CD14-positive monocyte (primary cell): ENCODE measurements at regions of chr9 and their contacts with region 1.

Region 1: GRCh38 chr9:83937911-83938323 is 16.7 kb upstream of the KIF27 start:
- DNase-seq: peak; percentile 50 to 78 (median 70)
- H3K4me3 ChIP-seq: no peak overlapping the region
- H3K4me3 Mint-ChIP-seq: no peak overlapping the region
- H3K27ac ChIP-seq: no peak overlapping the region
- H3K27ac Mint-ChIP-seq: peak overlapping the region in 4 of 7 donors; percentile 16 to 65 (median 31)
- H3K4me1 ChIP-seq: peaks cover 30 to 34% of the 10 kb centered on the region in 2 donors
- H3K4me1 Mint-ChIP-seq: peaks cover 33% of the 10 kb centered on the region
- H3K27me3 ChIP-seq: no peaks in the 10 kb centered on the region
- H3K27me3 Mint-ChIP-seq: peaks cover 0 to 1% (median 0%) of the 10 kb centered on the region in 3 donors
- CTCF ChIP-seq: peak; percentile 86

Region 2: DNA sequence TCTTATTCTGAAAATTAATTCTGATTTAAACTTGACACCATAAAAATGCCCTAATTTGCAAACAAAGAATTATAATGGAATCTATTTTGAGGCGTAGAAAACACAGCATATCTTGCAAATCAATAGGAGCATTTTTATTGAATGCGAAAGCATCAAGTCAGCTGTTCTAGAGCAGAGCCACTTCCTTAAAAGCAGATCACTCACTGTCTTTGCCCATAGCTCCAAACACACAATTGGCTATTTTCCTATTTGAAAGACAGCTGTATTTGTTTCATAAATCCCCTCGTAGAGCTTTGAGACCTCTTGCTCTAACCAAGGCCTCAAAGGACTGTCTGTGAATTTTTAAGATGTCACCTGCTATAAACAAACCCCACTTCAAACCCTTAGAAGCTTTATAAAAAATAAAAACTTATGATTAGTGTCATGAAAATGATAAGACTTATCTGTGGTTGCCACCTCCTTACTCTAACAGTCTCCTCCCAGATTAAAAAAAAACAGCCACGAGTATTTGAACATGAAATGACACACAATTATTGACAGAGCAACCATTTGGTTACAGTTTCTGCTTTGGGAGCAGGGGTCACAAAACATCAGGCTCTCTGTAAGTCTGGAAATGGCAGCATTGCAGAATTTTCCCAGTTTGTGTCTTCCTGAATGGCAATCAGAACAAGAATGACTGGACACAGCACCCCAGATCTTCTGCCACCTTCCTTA is 799.3 kb before region 1 on chr9:
- intact Hi-C with region 1: no loop called
- DNase-seq: no peak
- H3K4me3 ChIP-seq: no peak overlapping the region
- H3K4me3 Mint-ChIP-seq: no peak overlapping the region
- H3K27ac ChIP-seq: no peak overlapping the region
- H3K27ac Mint-ChIP-seq: no peak overlapping the region
- H3K4me1 ChIP-seq: no peaks in the 10 kb centered on the region
- H3K4me1 Mint-ChIP-seq: no peaks in the 10 kb centered on the region
- H3K27me3 ChIP-seq: no peaks in the 10 kb centered on the region
- H3K27me3 Mint-ChIP-seq: peaks cover 0 to 3% (median 1%) of the 10 kb centered on the region in 3 donors
- CTCF ChIP-seq: no peak

Region 3: DNA sequence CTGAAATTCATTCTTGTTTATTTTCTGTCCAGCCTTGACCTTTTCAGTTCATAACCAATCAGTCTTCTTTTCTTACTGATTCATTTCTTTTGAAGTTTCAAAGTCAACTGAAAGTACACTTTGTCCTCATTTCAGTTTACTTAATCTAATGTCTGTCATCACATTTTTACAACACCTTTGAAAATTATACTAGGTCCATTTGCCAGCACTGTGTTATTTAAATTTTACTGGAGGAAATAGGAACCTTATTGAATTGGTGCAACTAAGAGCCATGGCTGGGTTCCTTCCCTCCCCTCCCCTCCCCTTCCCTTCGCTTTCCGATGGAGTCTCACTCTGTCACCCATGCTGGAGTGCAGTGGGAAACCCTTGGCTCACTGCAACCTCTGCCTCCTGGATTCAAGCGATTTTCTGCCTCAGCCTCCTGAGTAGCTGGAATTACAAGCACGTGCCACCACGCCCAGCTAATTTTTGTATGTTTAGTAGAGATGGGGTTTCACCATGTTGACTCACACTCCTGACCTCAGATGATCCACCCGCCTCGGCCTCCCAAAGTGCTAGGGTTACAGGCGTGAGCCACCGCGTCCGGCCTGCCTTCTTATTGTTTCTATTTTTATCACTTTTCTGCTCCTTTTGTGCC is 49.0 kb after region 1 on chr9:
- intact Hi-C with region 1: no loop called
- DNase-seq: peak in 1 of 3 donors; percentile 25
- H3K4me3 ChIP-seq: no peak overlapping the region
- H3K4me3 Mint-ChIP-seq: no peak overlapping the region
- H3K27ac ChIP-seq: peak overlapping the region in 1 of 2 donors; percentile 35
- H3K27ac Mint-ChIP-seq: peak overlapping the region in 5 of 7 donors; percentile 20 to 69 (median 30)
- H3K4me1 ChIP-seq: peaks cover 4 to 22% of the 10 kb centered on the region in 2 donors
- H3K4me1 Mint-ChIP-seq: peaks cover 31% of the 10 kb centered on the region
- H3K27me3 ChIP-seq: no peaks in the 10 kb centered on the region
- H3K27me3 Mint-ChIP-seq: peaks cover 0 to 3% (median 0%) of the 10 kb centered on the region in 3 donors
- CTCF ChIP-seq: no peak

Region 4: GRCh38 chr9:84170521-84171141 is 232.7 kb after region 1 on chr9:
- intact Hi-C with region 1: loop called in 1 of 2 experiments (anchors 5 kb)
- DNase-seq: no peak
- H3K4me3 ChIP-seq: no peak overlapping the region
- H3K4me3 Mint-ChIP-seq: no peak overlapping the region
- H3K27ac ChIP-seq: no peak overlapping the region
- H3K27ac Mint-ChIP-seq: peak overlapping the region in 1 of 7 donors; percentile 11
- H3K4me1 ChIP-seq: peaks cover 20 to 24% of the 10 kb centered on the region in 2 donors
- H3K4me1 Mint-ChIP-seq: peaks cover 26% of the 10 kb centered on the region
- H3K27me3 ChIP-seq: no peaks in the 10 kb centered on the region
- H3K27me3 Mint-ChIP-seq: peaks cover 0 to 2% (median 0%) of the 10 kb centered on the region in 3 donors
- CTCF ChIP-seq: no peak

Region 5: GRCh38 chr9:84261082-84261746 is 323.3 kb after region 1 on chr9:
- intact Hi-C with region 1: loop called (anchors 2 to 5 kb)
- DNase-seq: peak; percentile 53 to 68 (median 66)
- H3K4me3 ChIP-seq: no peak overlapping the region
- H3K4me3 Mint-ChIP-seq: peak overlapping the region; percentile 46 to 71
- H3K27ac ChIP-seq: no peak overlapping the region
- H3K27ac Mint-ChIP-seq: no peak overlapping the region
- H3K4me1 ChIP-seq: peaks cover 4 to 5% of the 10 kb centered on the region in 2 donors
- H3K4me1 Mint-ChIP-seq: peaks cover 7% of the 10 kb centered on the region
- H3K27me3 ChIP-seq: peaks cover 2 to 3% of the 10 kb centered on the region in 2 donors
- H3K27me3 Mint-ChIP-seq: peaks cover 0 to 4% (median 2%) of the 10 kb centered on the region in 3 donors
- CTCF ChIP-seq: peak; percentile 91

Region 6: DNA sequence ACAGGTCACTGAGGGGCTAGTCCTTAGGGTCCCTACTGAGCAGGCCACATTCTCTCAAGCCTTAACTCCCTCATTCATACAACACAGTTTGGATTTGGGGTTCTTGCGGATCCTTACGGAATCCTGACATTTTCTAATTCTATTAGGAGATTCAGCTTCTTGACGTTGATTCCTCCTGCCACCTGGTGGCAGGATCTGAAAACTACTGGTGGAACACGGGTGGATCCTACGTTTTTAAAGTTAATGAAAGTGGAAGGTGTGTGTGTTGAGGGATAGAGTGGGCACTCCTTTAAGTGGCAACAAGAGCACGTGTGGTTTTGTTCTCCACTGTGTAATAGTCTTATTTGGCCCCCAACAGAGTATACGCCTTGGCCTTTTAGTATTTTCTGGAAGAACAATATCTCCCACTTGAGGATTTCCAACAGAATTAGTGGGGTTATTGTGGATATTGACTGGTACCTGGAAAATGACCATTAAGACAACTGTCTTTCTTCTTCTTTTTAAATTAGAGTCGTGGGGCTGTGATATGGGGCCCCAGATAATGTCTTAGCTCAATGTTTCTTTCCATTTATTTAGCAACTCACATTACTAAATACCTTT is 377.5 kb after region 1 on chr9:
- intact Hi-C with region 1: loop called (anchors 1 to 5 kb)
- DNase-seq: peak; percentile 51 to 63 (median 57)
- H3K4me3 ChIP-seq: peak overlapping the region in 1 of 3 experiments; percentile 19
- H3K4me3 Mint-ChIP-seq: peak overlapping the region in 1 of 2 donors; percentile 29
- H3K27ac ChIP-seq: no peak overlapping the region
- H3K27ac Mint-ChIP-seq: no peak overlapping the region
- H3K4me1 ChIP-seq: peaks cover 7 to 9% of the 10 kb centered on the region in 2 donors
- H3K4me1 Mint-ChIP-seq: peaks cover 18% of the 10 kb centered on the region
- H3K27me3 ChIP-seq: no peaks in the 10 kb centered on the region
- H3K27me3 Mint-ChIP-seq: no peaks in the 10 kb centered on the region
- CTCF ChIP-seq: peak; percentile 86